Tibial artery (tissue), 4 donors: ENCODE measurements at regions of chr22 and their contacts with region 1.

Region 1: DNA sequence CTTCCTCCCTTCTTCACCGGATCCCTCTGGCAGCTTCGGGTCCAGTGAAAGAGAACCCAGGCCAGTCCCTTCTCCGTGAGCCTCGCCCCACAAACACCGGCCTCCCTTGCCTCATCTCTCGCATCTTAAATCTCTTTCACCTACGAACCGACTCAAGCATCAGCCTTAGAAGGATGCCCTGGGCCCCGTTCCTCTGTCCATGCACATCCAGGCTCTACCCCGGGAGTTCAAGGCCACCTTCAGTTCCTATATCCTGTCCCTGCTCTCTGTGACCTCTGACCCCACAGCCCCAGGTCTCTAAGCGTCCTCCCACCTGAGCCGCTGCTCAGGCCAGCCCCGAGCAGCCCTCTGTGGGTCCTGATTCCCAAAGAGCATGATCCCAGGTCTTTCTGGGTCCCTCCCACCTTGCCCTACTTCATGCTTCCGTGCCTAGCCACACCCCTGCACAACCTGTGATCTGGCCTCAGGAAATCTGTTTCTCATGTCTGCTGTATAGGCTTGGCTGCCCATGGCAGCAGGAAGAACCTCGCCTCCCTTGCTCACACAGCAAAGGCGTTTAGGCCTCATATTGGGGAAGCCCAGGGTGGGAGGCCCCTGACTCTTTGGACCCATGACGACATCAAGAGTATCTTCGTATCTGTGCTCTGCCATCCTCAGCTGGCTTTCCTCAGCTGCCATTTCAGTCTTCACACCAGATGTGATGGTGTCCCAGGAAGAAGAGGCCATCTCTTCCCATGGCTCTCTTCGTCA is 77.5 kb upstream of the SEPTIN5 start:
- DNase-seq: peak in 1 of 2 donors; percentile 47
- H3K4me3 ChIP-seq: no peak overlapping the region
- H3K27ac ChIP-seq: no peak overlapping the region
- H3K4me1 ChIP-seq: no peaks in the 10 kb centered on the region
- H3K27me3 ChIP-seq: peaks cover 0 to 14% of the 10 kb centered on the region in 2 donors
- CTCF ChIP-seq: no peak

Region 2: DNA sequence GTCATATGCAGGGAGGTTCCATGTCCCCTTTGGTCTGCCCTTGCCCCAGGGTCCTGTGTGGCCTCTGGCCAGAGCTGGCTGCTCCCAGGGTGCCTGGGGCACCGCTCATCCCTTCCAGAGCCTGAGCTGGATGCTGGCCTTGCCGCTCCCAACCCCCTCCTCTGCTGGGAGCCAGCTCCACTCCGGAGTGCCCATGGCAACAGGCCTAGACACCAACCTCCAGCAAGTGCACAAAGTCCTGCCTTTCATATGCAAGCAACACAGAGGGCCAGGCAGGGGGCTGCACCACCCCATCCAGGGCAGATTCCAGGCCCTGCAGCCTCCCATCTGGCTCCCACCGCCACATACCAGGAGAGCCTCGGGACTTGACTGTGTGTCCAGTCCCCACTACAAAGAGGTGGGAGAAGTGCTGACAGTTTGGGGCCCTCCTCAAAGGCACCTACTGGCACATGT is 363.4 kb after region 1 on chr22:
- intact Hi-C with region 1: loop called (anchors 5 kb)
- DNase-seq: peak in 1 of 2 donors; percentile 70
- H3K4me3 ChIP-seq: no peak overlapping the region
- H3K27ac ChIP-seq: no peak overlapping the region
- H3K4me1 ChIP-seq: peaks cover 8 to 57% (median 49%) of the 10 kb centered on the region in 4 donors
- H3K27me3 ChIP-seq: no peaks in the 10 kb centered on the region
- CTCF ChIP-seq: no peak